Common myeloid progenitor, CD34-positive (primary cell): ENCODE measurements at regions of chr1 and their contacts with region 1.

Region 1: GRCh38 chr1:213374369-213374768 is 323.3 kb downstream of the RPS6KC1 start:
- DNase-seq: peak; percentile 28 to 66 (median 53)
- H3K4me3 ChIP-seq: no peak overlapping the region
- H3K27ac ChIP-seq: no peak overlapping the region
- H3K4me1 ChIP-seq: no peaks in the 10 kb centered on the region
- H3K27me3 ChIP-seq: peaks cover 0 to 5% (median 0%) of the 10 kb centered on the region in 5 experiments

Region 2: GRCh38 chr1:213399695-213400094 is 25.3 kb after region 1 on chr1:
- CTCF ChIA-PET with region 1: no interaction called
- POLR2A ChIA-PET with region 1: no interaction called
- DNase-seq: no peak
- H3K4me3 ChIP-seq: no peak overlapping the region
- H3K27ac ChIP-seq: no peak overlapping the region
- H3K4me1 ChIP-seq: no peaks in the 10 kb centered on the region
- H3K27me3 ChIP-seq: no peaks in the 10 kb centered on the region

Region 3: GRCh38 chr1:214123061-214123784 is 748.9 kb after region 1 on chr1:
- CTCF ChIA-PET with region 1: interaction called, 11 read pairs
- POLR2A ChIA-PET with region 1: no interaction called
- DNase-seq: peak; percentile 36 to 62 (median 57)
- H3K4me3 ChIP-seq: no peak overlapping the region
- H3K27ac ChIP-seq: no peak overlapping the region
- H3K4me1 ChIP-seq: peaks cover 4 to 12% (median 6%) of the 10 kb centered on the region in 4 experiments
- H3K27me3 ChIP-seq: peaks cover 0 to 3% (median 0%) of the 10 kb centered on the region in 5 experiments